A549 (cell line): ENCODE measurements at regions of chr2 and their contacts with region 1.

Region 1: DNA sequence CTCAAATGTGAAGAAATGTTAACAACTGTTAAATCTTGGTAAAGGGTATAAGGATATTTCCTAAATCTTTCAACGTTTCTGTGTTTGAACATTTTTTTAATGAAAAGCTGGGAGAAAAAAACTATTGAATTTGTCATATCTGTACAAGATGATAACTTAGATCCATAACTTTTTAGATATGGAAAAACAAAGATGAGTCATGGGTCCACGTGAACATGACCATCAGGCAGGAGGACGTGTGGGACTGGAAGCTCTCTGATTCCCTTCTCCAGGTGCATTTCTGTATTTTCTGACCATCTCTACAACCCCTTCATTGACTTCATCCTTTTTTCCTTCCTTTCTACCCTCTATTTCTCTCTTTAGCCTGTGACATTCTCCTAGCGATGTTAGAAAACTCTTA is 141.6 kb downstream of the DHRS9 start:
- DNase-seq: no peak
- ATAC-seq: no peak
- H3K4me3 ChIP-seq: no peak overlapping the region
- H3K27ac ChIP-seq: no peak overlapping the region
- H3K4me1 ChIP-seq: no peaks in the 10 kb centered on the region
- CTCF ChIP-seq: no peak
- EP300 ChIP-seq: no peak
- POLR2A ChIP-seq: no peak
- RAD21 ChIP-seq: no peak

Region 2: GRCh38 chr2:169185711-169186110 is 25.2 kb before region 1 on chr2:
- CTCF ChIA-PET with region 1: no interaction called
- POLR2A ChIA-PET with region 1: no interaction called
- DNase-seq: no peak
- ATAC-seq: no peak
- H3K4me3 ChIP-seq: no peak overlapping the region
- H3K27ac ChIP-seq: no peak overlapping the region
- H3K4me1 ChIP-seq: no peaks in the 10 kb centered on the region
- CTCF ChIP-seq: no peak
- EP300 ChIP-seq: no peak
- POLR2A ChIP-seq: no peak
- RAD21 ChIP-seq: no peak

Region 3: DNA sequence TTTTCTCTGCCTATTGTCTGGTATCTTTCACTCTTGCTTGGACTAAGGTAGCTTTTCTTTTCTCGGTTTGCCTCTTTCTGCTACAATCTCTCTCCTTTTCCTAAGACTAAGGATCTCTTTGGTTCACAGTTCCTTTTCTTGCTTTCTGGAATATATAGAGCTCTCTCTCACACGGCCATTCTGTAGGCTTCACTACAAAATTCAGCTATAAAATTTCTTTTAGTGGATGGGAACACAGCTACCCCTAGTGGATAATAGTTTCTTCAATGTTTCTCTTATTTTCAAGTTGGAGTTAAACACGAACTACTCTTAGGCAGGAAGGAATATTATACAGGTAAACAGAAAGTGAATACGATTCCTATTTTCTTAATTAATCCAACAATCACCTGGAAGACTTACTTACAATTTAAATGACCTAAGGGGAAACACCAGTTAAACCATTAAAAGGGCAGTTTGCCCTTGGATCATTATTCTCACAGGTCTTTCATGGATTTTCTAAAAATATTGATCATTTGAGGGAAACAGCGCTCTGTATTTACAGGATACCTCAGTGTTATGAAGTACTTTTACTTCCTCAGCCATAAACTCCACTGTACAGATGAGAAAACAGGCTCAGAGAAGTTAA is 10.9 kb after region 1 on chr2:
- CTCF ChIA-PET with region 1: interaction called, 14 read pairs
- POLR2A ChIA-PET with region 1: no interaction called
- DNase-seq: peak; percentile 5 to 21
- ATAC-seq: peak; percentile 76 to 79; a peak in 5 of 6 replicates
- H3K4me3 ChIP-seq: no peak overlapping the region
- H3K27ac ChIP-seq: no peak overlapping the region
- H3K4me1 ChIP-seq: no peaks in the 10 kb centered on the region
- CTCF ChIP-seq: peak; percentile 61
- EP300 ChIP-seq: no peak
- POLR2A ChIP-seq: no peak
- RAD21 ChIP-seq: peak; percentile 42 to 55

Region 4: DNA sequence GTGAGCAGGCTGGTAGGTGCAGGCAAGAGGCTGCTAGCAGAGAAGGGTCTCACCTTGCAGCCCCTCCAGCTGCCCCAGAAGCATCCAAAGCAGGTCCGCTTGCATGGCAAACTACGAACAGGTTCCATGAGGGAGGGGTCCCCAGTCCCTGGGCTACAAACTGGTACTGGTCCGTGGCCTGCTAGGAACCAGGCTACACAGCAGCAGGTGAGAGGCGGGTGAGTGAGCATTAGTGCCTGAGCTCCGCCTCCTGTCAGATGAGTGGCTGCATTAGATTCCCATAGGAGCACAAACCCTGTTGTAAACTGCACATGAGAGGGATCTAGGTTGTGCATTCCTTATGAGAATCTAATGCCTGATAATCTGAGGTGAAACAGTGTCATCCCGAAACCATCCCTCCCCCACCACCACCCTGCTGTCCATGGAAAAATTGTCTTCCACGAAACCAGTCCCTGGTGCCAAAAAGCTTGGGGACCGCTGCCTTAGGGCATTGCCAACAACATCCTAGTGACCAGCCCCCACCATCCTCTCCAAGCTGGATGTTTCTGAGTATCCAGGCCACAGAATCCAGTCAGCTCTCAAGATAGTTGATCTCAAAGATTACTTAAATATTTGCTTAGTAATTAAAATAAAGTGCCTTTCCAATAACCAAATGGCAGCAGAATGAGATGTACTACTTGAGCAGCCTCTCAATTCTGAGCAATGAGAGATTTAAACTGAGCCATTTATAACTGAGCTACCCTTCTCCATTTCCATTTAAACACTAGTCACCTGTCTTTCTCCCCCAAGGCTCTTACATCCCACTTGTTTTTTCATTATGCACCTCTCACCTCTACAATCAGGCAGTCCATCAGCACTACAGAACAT is 119.0 kb after region 1 on chr2:
- CTCF ChIA-PET with region 1: no interaction called
- POLR2A ChIA-PET with region 1: no interaction called
- DNase-seq: no peak
- ATAC-seq: peak; percentile 23 to 41; a peak in 2 of 6 replicates
- H3K4me3 ChIP-seq: no peak overlapping the region
- H3K27ac ChIP-seq: no peak overlapping the region
- H3K4me1 ChIP-seq: no peaks in the 10 kb centered on the region
- CTCF ChIP-seq: no peak
- EP300 ChIP-seq: no peak
- POLR2A ChIP-seq: no peak
- RAD21 ChIP-seq: no peak